CD14-positive monocyte (primary cell): ENCODE measurements at regions of chr6 and their contacts with region 1.

Region 1: DNA sequence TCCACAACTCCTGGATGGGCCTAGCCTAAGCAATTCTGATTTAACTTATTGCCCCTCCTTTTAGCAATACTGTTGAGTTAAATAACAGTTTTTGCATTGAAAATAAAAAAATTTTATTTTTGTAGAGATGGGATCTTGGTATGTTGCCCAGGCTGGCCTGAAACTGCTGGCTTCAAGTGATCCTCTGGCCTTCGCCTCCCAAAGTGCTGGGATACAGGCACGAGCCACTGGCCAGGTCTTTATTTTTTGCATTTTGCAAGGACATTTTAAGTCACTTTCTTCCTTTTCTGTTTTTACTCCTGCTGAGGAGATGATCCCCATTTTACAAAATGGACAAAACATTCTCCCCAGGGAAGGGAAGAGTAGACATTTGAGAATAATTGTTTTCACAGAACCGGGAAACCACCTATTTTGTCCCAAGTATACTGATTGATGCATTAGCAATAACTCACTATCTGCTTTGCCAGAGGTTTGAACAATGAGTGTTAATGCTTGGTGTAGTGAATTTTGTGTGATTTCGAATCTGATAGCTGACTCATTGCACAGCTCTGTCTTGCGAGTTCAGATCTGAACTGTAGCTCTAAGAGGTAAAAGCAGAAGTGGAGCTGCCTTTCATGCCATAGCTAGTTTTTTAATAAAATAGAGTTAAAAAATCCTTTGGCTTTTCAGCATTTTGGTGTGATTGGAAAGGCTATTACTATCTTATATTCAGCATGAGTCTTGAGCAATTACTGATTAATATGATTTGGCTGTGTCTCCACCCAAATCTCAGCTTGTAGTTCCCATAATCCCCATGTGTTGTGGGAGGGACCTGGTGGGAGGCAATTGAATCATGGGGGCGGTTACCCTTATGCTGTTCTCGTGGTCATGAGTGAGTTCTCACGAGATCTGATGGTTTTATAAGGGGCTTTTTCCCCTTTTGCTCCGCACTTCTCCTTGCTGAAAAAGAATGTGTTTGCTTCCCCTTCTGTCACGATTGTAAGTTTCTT is 20.9 kb downstream of the IGF2R start:
- DNase-seq: peak; percentile 73 to 84 (median 74)
- H3K4me3 ChIP-seq: peak overlapping the region in 1 of 3 experiments; percentile 38
- H3K4me3 Mint-ChIP-seq: peak overlapping the region in 1 of 2 donors; percentile 31
- H3K27ac ChIP-seq: peak overlapping the region; percentile 27 to 66
- H3K27ac Mint-ChIP-seq: peak overlapping the region; percentile 74 to 89 (median 80)
- H3K4me1 ChIP-seq: peaks cover 44 to 62% of the 10 kb centered on the region in 2 donors
- H3K4me1 Mint-ChIP-seq: peaks cover 63% of the 10 kb centered on the region
- H3K27me3 ChIP-seq: no peaks in the 10 kb centered on the region
- H3K27me3 Mint-ChIP-seq: peaks cover 2 to 6% (median 5%) of the 10 kb centered on the region in 3 donors
- CTCF ChIP-seq: no peak

Region 2: DNA sequence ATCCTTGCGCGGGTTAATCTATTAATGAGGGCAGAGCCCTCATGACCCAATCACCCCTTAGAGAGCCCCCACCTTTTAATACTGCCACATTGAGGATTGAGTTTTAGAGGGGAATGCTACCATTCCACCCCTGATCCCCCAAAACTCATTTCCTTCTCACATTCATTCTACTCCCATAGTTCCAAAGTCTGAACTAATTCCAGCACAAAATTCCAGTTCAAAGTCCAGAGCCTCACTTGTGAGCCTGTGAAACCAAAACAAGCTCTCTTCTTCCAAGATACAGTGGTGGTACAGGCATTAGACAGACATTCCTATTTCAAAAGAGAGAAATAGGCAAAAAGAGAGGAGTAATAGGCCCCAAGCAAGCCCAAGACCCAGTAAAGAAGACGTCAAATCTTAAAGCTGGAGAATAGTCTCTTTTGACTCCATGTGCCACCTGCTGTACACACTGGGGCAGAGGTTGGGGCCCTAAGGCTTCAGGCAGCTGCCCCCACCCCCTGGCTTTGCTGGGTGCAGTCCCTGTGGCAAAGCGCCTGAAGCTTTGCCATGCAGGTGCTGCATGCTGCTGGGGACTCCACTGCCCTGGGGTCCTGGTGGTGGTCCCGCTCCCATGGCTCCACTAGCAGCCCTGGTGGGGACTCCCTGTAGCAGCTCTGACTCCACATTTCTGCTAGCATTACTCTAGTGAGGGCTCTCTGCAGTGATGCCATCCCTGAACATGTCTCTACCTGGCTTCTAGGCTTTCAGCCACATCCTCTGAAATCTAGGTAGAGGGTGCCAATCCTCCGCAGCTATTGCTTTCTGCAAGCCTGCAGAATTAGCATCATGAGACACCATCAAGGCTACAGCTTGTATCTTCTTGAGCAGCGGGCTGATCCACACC is 1031.0 kb before region 1 on chr6:
- intact Hi-C with region 1: no loop called
- DNase-seq: no peak
- H3K4me3 ChIP-seq: no peak overlapping the region
- H3K4me3 Mint-ChIP-seq: no peak overlapping the region
- H3K27ac ChIP-seq: no peak overlapping the region
- H3K27ac Mint-ChIP-seq: no peak overlapping the region
- H3K4me1 ChIP-seq: peaks cover 3 to 11% of the 10 kb centered on the region in 2 donors
- H3K4me1 Mint-ChIP-seq: peaks cover 18% of the 10 kb centered on the region
- H3K27me3 ChIP-seq: no peaks in the 10 kb centered on the region
- H3K27me3 Mint-ChIP-seq: peaks cover 1 to 4% (median 3%) of the 10 kb centered on the region in 3 donors
- CTCF ChIP-seq: no peak

Region 3: GRCh38 chr6:159953091-159953601 is 36.6 kb before region 1 on chr6:
- intact Hi-C with region 1: loop called in 1 of 2 experiments (anchors 5 kb)
- DNase-seq: peak; percentile 81 to 90 (median 90)
- H3K4me3 ChIP-seq: peak overlapping the region in 2 of 3 experiments; percentile 34 to 64
- H3K4me3 Mint-ChIP-seq: peak overlapping the region; percentile 54 to 83
- H3K27ac ChIP-seq: peak overlapping the region; percentile 85 to 94
- H3K27ac Mint-ChIP-seq: peak overlapping the region; percentile 95 to 100 (median 99)
- H3K4me1 ChIP-seq: peaks cover 51 to 55% of the 10 kb centered on the region in 2 donors
- H3K4me1 Mint-ChIP-seq: peaks cover 57% of the 10 kb centered on the region
- H3K27me3 ChIP-seq: no peaks in the 10 kb centered on the region
- H3K27me3 Mint-ChIP-seq: peaks cover 0 to 5% (median 4%) of the 10 kb centered on the region in 3 donors
- CTCF ChIP-seq: no peak